HepG2 (cell line): ENCODE measurements at regions of chr1 and their contacts with region 1.

Region 1: GRCh38 chr1:7667625-7668218 is 103.4 kb upstream of the VAMP3 start:
- DNase-seq: peak; percentile 67
- ATAC-seq: peak; percentile 78
- H3K4me3 ChIP-seq: no peak overlapping the region
- H3K27ac ChIP-seq: no peak overlapping the region
- H3K4me1 ChIP-seq: peaks cover 28% of the 10 kb centered on the region
- H3K27me3 ChIP-seq: peaks cover 2 to 11% of the 10 kb centered on the region in 2 experiments; a peak in 3 of 5 replicates
- CTCF ChIP-seq: peak; percentile 100
- EP300 ChIP-seq: no peak
- POLR2A ChIP-seq: no peak
- RAD21 ChIP-seq: peak; percentile 100

Region 2: GRCh38 chr1:7704214-7705047 is 36.7 kb after region 1 on chr1:
- CTCF ChIA-PET with region 1: no interaction called
- POLR2A ChIA-PET with region 1: interaction called, 9 read pairs
- in situ Hi-C with region 1: no loop called
- intact Hi-C with region 1: loop called (anchors 5 kb)
- DNase-seq: peak; percentile 77
- ATAC-seq: peak; percentile 93
- H3K4me3 ChIP-seq: peak overlapping the region; percentile 50 to 76 (median 71); a peak in 4 of 6 replicates
- H3K27ac ChIP-seq: no peak overlapping the region
- H3K4me1 ChIP-seq: peaks cover 15% of the 10 kb centered on the region
- H3K27me3 ChIP-seq: 0 out of 5 replicates have a peak, but pooled peaks cover 0 to 3% of the 10 kb centered on the region in 2 experiments
- CTCF ChIP-seq: no peak
- EP300 ChIP-seq: no peak
- POLR2A ChIP-seq: peak in 1 of 2 experiments; percentile 61; a peak in 3 of 4 replicates
- RAD21 ChIP-seq: 0 out of 2 replicates have a peak, but pooled peaks have one; percentile 14

Region 3: GRCh38 chr1:7719468-7720094 is 51.9 kb after region 1 on chr1:
- CTCF ChIA-PET with region 1: no interaction called
- POLR2A ChIA-PET with region 1: no interaction called
- in situ Hi-C with region 1: loop called (anchors 5 kb)
- intact Hi-C with region 1: no loop called
- DNase-seq: no peak
- ATAC-seq: no peak
- H3K4me3 ChIP-seq: no peak overlapping the region
- H3K27ac ChIP-seq: no peak overlapping the region
- H3K4me1 ChIP-seq: peaks cover 23% of the 10 kb centered on the region
- H3K27me3 ChIP-seq: no peaks in the 10 kb centered on the region
- CTCF ChIP-seq: no peak
- EP300 ChIP-seq: no peak
- POLR2A ChIP-seq: no peak
- RAD21 ChIP-seq: no peak

Region 4: DNA sequence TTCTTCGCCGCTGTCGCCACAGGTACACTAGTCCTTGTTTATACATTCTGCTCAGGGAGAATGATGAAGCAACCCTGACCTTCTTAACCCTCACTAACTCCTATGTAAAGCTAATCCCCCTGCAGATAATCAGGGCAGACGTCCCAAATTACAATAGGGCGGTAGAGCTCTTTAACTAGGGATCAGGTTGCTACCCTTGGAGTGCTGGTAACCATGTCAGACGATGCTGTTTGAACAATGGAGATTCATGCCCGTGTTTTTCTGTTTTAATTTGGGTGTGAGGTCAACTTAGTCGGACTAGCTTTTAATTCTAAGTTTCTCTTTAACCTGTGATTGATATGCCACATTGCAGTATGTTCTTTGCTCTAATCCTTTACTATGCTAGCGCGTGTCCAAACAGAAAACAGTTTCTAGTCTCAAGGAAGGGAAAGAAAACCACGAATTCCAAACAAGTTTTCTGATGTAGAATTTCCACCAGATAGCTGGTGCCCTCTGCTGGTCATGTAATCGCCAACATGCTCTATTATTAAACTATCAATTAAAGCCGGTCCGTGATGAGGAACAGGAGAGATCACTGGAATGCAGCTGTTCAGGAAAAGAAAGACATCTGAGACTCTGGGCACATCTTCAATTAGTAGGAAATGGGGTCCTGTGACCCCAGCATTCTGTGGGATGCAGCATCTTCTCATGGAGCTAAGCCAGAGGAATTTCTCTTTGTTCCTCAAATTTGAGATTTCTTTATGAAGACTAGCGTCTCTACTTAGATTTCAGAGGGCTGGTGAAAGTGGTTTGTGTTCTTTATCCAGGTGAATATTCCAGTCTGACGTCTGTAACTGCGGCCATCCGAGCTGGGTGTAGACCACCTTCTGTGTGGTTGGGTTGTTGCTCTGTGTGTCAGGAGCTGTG is 85.0 kb after region 1 on chr1:
- CTCF ChIA-PET with region 1: interaction called, 226 read pairs
- POLR2A ChIA-PET with region 1: interaction called, 7 read pairs
- in situ Hi-C with region 1: loop called (anchors 5 kb)
- intact Hi-C with region 1: loop called (anchors 1 kb)
- DNase-seq: peak; percentile 69
- ATAC-seq: peak; percentile 66
- H3K4me3 ChIP-seq: peak overlapping the region in 1 of 3 experiments; percentile 5; a peak in 1 of 6 replicates
- H3K27ac ChIP-seq: no peak overlapping the region
- H3K4me1 ChIP-seq: peaks cover 34% of the 10 kb centered on the region
- H3K27me3 ChIP-seq: no peaks in the 10 kb centered on the region
- CTCF ChIP-seq: peak; percentile 77
- EP300 ChIP-seq: 0 out of 4 replicates have a peak, but pooled peaks of 1 of the 2 experiments have one; percentile 29
- POLR2A ChIP-seq: no peak
- RAD21 ChIP-seq: peak; percentile 67

Region 5: DNA sequence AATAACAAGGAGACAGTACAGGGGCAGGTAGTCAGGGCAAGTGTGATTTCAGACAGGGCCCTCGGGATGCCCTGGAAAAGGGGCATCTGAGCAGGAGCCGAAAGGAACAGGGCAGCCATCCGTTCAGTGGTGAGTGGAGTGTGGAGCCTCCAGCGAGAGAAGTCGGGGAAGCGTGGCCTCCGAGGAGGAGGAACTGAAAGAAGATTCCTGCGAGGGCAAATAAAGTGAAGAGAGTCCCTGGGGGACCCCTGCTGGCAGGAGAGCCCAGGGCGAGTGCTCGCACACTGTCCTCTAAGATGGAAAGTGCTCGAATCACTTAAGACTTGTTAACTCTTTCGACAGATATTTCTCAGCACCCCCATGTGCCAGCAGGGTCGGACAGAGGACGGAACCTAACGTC is 188.6 kb after region 1 on chr1:
- CTCF ChIA-PET with region 1: interaction called, 4 read pairs
- POLR2A ChIA-PET with region 1: no interaction called
- in situ Hi-C with region 1: loop called (anchors 25 kb)
- intact Hi-C with region 1: loop called (anchors 2 kb)
- DNase-seq: peak; percentile 18
- ATAC-seq: peak; percentile 88
- H3K4me3 ChIP-seq: peak overlapping the region; percentile 28 to 64 (median 54); a peak in 4 of 6 replicates
- H3K27ac ChIP-seq: no peak overlapping the region
- H3K4me1 ChIP-seq: peaks cover 27% of the 10 kb centered on the region; the same call in 1 of the 2 replicates
- H3K27me3 ChIP-seq: peaks cover 0 to 3% of the 10 kb centered on the region in 2 experiments; a peak in 2 of 5 replicates
- CTCF ChIP-seq: peak; percentile 70
- EP300 ChIP-seq: no peak
- POLR2A ChIP-seq: no peak
- RAD21 ChIP-seq: peak; percentile 25; the same call in 1 of the 2 replicates

Region 6: DNA sequence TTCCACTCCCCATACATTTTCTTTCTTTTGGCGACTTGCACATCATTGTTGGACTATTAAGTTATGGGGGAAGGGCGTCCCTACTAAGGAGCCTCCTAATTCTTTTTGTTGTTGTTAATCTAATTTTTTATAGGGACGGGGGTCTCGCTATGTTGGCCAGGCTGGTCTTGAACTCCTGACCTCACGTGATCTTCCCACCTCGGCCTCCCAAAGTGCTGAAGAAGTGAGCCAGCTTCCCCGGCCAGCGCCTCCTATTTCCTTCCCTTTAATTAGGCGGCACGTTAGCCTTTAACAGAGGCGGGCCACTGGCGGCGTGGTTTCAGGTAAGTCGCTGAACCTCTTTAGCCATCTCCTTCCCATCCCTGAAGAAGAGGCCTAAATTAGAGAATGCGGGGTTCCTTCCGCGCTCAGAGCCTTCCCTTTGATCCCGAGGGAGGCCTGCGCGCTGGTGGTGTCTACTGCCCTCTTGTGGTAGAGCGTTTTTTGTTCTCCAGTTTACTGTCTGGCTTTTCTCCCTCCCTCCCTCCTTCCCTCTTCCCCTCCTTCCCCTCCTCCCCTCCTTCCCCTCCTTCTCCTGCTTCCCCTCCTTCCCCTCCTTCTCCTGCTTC is 234.9 kb after region 1 on chr1:
- CTCF ChIA-PET with region 1: interaction called, 11 read pairs
- POLR2A ChIA-PET with region 1: no interaction called
- in situ Hi-C with region 1: loop called (anchors 5 kb)
- intact Hi-C with region 1: no loop called
- DNase-seq: peak; percentile 27
- ATAC-seq: peak; percentile 81
- H3K4me3 ChIP-seq: no peak overlapping the region; a peak in 1 of 6 replicates
- H3K27ac ChIP-seq: no peak overlapping the region
- H3K4me1 ChIP-seq: no peaks in the 10 kb centered on the region
- H3K27me3 ChIP-seq: peaks cover 1 to 18% of the 10 kb centered on the region in 2 experiments; a peak in 4 of 5 replicates
- CTCF ChIP-seq: peak; percentile 87
- EP300 ChIP-seq: no peak
- POLR2A ChIP-seq: no peak
- RAD21 ChIP-seq: peak; percentile 64